HepG2 (cell line): ENCODE measurements at regions of chr3 and their contacts with region 1.

Region 1: GRCh38 chr3:129627429-129628168 is 21.1 kb upstream of the PLXND1 start:
- DNase-seq: peak; percentile 77
- ATAC-seq: peak; percentile 48
- H3K4me3 ChIP-seq: peak overlapping the region; percentile 67 to 97 (median 76)
- H3K27ac ChIP-seq: peak overlapping the region; percentile 95
- H3K4me1 ChIP-seq: peaks cover 63% of the 10 kb centered on the region
- H3K27me3 ChIP-seq: no peaks in the 10 kb centered on the region; a peak in 1 of 5 replicates
- CTCF ChIP-seq: peak; percentile 87
- EP300 ChIP-seq: no peak
- POLR2A ChIP-seq: peak in 1 of 2 experiments; percentile 61; a peak in 2 of 4 replicates
- RAD21 ChIP-seq: peak; percentile 92

Region 2: DNA sequence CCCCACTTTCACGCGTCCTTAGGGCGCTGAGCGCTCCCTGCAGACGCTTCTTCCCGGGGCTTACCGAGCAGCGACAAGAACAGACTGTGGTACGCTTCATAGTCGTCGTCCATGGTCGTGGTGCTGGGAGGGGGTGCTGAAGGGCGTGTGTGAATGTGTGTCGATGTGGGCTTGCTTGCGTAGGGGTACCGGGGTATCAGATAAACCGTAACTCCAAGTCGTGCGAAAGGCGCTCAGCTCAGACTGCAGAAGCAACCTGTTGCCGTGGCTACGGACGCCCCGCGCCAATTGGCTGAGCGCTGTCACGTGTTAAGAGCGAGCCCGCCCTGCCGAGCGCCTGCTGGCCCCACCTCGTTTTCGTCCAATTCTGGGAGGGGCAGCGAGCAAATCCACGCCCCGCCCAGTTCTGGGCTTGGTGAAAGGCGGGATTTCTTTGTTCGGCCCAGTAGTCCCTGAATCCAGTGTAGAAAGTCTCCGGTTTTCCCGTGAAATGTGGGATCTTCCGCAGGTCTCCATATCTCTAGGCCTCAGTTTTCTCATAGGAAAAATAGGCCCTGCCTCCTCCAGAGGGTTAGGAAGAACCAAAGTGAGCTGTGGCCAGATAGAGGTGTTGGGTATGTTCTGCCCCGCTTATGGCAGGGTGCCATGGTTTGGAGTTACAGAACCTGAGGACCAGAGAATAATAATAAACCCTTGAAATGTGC is 199.1 kb before region 1 on chr3 and contains the start of gene EFCAB12:
- CTCF ChIA-PET with region 1: no interaction called
- POLR2A ChIA-PET with region 1: no interaction called
- in situ Hi-C with region 1: no loop called
- intact Hi-C with region 1: no loop called
- DNase-seq: peak; percentile 77
- ATAC-seq: peak; percentile 96
- H3K4me3 ChIP-seq: peak within 1 kb of the TSS; percentile 56 to 75 (median 56); a peak in 5 of 6 replicates
- H3K27ac ChIP-seq: peak within 1 kb of the TSS; percentile 41
- H3K4me1 ChIP-seq: peaks cover 56% of the 10 kb centered on the region
- H3K27me3 ChIP-seq: peaks cover 0 to 4% of the 10 kb centered on the region in 2 experiments; a peak in 2 of 5 replicates
- CTCF ChIP-seq: peak; percentile 44
- EP300 ChIP-seq: no peak
- POLR2A ChIP-seq: peak in 1 of 2 experiments; percentile 47; a peak in 3 of 4 replicates
- RAD21 ChIP-seq: no peak
- total RNA-seq, gene EFCAB12: 0.11 and 0.31 TPM in 2 replicates

Region 3: GRCh38 chr3:129490242-129491045 is 137.2 kb before region 1 on chr3:
- CTCF ChIA-PET with region 1: interaction called, 3 read pairs
- POLR2A ChIA-PET with region 1: interaction called, 19 read pairs
- in situ Hi-C with region 1: no loop called
- intact Hi-C with region 1: loop called (anchors 1 kb)
- DNase-seq: peak; percentile 83
- ATAC-seq: peak; percentile 94
- H3K4me3 ChIP-seq: no peak overlapping the region
- H3K27ac ChIP-seq: peak overlapping the region; percentile 23
- H3K4me1 ChIP-seq: peaks cover 31% of the 10 kb centered on the region
- H3K27me3 ChIP-seq: no peaks in the 10 kb centered on the region
- CTCF ChIP-seq: peak; percentile 96
- EP300 ChIP-seq: no peak
- POLR2A ChIP-seq: no peak
- RAD21 ChIP-seq: peak; percentile 97

Region 4: GRCh38 chr3:129596194-129597086 is 31.2 kb before region 1 on chr3:
- CTCF ChIA-PET with region 1: no interaction called
- POLR2A ChIA-PET with region 1: interaction called, 107 read pairs
- in situ Hi-C with region 1: no loop called
- intact Hi-C with region 1: loop called (anchors 2 kb)
- DNase-seq: peak; percentile 91
- ATAC-seq: peak; percentile 72
- H3K4me3 ChIP-seq: peak overlapping the region; percentile 35 to 70 (median 45)
- H3K27ac ChIP-seq: peak overlapping the region; percentile 94
- H3K4me1 ChIP-seq: peaks cover 91% of the 10 kb centered on the region
- H3K27me3 ChIP-seq: no peaks in the 10 kb centered on the region
- CTCF ChIP-seq: 0 out of 2 replicates have a peak, but pooled peaks have one; percentile 5
- EP300 ChIP-seq: peak in 1 of 2 experiments; percentile 61; a peak in 2 of 4 replicates
- POLR2A ChIP-seq: peak in 1 of 2 experiments; percentile 53; a peak in 1 of 4 replicates
- RAD21 ChIP-seq: no peak

Region 5: GRCh38 chr3:129611812-129612533 is 15.6 kb before region 1 on chr3:
- CTCF ChIA-PET with region 1: no interaction called
- POLR2A ChIA-PET with region 1: interaction called, 26 read pairs
- in situ Hi-C with region 1: no loop called
- intact Hi-C with region 1: loop called (anchors 2 kb)
- DNase-seq: peak; percentile 70
- ATAC-seq: peak; percentile 47
- H3K4me3 ChIP-seq: peak overlapping the region in 2 of 3 experiments; percentile 31 to 69; a peak in 4 of 6 replicates
- H3K27ac ChIP-seq: peak overlapping the region; percentile 33
- H3K4me1 ChIP-seq: peaks cover 94% of the 10 kb centered on the region
- H3K27me3 ChIP-seq: no peaks in the 10 kb centered on the region; a peak in 1 of 5 replicates
- CTCF ChIP-seq: peak; percentile 74
- EP300 ChIP-seq: no peak; a peak in 1 of 4 replicates
- POLR2A ChIP-seq: no peak
- RAD21 ChIP-seq: no peak

Region 6: DNA sequence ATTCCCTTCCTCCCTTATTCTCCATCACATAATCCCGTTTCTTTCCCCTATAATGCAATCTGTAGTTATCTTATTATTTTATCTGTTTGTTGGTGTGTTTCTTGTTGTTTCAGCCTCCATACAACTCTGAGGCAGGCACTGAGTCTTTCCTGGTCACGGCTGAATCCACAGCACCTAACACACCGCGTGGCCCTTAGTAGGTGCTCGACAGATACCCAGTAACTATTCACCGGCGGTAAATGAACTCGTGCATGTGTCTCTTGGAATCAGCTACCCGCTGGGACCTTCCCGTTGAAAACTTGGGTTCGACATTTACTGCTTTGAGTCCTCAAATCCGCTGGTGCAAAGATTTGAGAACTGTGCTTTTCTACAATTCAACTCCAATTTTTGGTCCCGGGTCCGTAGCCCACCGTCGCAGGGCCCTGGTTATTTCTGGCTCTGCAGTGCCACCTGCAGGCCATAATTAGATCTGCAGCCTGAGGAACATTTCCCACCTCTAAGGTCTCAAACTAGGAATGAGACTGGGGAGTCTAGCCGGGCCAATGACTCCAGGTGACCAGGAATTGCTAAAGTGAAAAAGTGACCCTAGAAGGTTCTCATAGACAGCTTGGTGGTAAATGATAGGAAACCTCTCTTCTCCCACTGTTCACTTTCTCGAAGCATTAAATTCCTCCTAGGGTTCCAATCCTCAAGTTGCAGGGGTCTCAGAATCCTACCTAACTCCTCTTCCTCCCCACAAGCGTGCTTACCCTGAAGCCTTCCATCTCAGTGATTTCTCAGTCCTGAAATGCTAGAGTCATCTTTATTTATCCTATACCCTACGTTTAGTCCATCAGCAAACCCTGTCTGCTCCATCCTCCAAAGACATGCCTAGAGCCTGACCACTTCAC is 306.9 kb after region 1 on chr3:
- CTCF ChIA-PET with region 1: interaction called, 3 read pairs
- POLR2A ChIA-PET with region 1: no interaction called
- in situ Hi-C with region 1: loop called (anchors 5 kb)
- intact Hi-C with region 1: loop called (anchors 1 kb)
- DNase-seq: peak; percentile 23
- ATAC-seq: peak; percentile 51
- H3K4me3 ChIP-seq: peak overlapping the region; percentile 23 to 53 (median 44)
- H3K27ac ChIP-seq: no peak overlapping the region
- H3K4me1 ChIP-seq: peaks cover 45% of the 10 kb centered on the region
- H3K27me3 ChIP-seq: 0 out of 5 replicates have a peak, but pooled peaks cover 0 to 9% of the 10 kb centered on the region in 2 experiments
- CTCF ChIP-seq: peak; percentile 89
- EP300 ChIP-seq: no peak
- POLR2A ChIP-seq: no peak
- RAD21 ChIP-seq: peak; percentile 77

Region 7: DNA sequence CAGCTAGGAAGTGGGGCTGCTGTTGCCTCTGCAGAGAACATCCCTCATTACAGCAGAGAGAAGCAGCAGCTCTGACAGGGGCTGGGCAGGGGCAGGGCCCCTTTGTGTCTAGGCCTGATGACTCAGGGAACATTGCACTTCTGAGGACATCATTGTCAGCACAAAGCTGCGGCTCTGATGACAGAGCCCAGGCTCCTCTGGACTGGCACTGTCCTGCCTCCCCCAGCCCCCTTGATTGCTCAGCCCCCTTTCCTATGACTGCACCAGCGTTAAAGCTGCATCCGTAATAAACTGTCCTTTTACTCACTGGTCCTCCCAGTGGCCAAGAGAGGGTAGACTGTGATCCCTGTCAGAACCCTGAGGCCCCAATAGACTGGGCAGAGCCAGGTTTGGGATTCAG is 365.2 kb after region 1 on chr3:
- CTCF ChIA-PET with region 1: no interaction called
- POLR2A ChIA-PET with region 1: no interaction called
- in situ Hi-C with region 1: no loop called
- intact Hi-C with region 1: no loop called
- DNase-seq: peak; percentile 21
- ATAC-seq: peak; percentile 96
- H3K4me3 ChIP-seq: no peak overlapping the region
- H3K27ac ChIP-seq: no peak overlapping the region
- H3K4me1 ChIP-seq: no peaks in the 10 kb centered on the region
- H3K27me3 ChIP-seq: peaks cover 1 to 22% of the 10 kb centered on the region in 2 experiments; a peak in 3 of 5 replicates
- CTCF ChIP-seq: peak; percentile 48
- EP300 ChIP-seq: no peak
- POLR2A ChIP-seq: no peak
- RAD21 ChIP-seq: no peak